Right ventricle myocardium inferior (tissue), 1 donor: ENCODE measurements at regions of chr13 and their contacts with region 1.

Region 1: GRCh38 chr13:48571126-48571913 is 38.4 kb upstream of the RCBTB2 start:
- DNase-seq: no peak
- ATAC-seq: peak; percentile 71

Region 2: DNA sequence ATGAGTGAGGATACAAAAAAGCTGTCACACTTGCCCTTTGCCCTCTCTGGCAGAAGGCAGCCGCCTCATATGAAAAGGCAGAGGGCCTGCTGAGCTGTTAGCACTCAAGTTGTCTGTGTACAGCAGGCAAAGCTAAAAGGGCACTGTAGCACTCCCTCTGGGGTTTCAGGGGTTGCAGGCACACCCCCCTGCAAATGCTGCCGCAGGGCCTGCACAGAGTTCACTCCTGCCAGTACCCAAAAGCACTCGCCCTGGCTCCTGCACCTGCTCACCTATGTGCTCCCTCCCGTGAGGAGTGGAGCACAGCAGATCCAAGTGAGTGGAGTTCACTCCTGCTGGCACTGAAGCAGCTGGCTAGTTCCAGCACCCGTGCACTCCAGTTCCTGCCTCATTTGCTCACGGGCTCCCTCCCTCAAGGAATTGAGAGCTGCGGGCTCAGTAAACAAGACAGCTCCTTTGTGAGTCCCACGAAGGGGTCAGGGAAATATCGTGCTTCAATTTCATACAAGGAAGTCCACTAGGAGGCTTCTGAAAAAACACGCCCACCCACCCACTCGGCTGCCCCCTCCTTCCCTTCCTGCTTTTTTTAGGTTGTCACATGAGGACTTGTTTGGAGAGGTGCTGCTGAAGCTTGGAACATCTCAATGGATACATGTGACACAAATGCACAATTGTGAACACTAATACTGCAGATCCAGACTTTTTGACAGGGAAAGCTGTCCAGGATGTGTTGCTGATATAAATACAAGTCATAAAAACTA is 28.6 kb before region 1 on chr13:
- intact Hi-C with region 1: loop called (anchors 2 kb)
- DNase-seq: peak; percentile 77
- ATAC-seq: peak; percentile 91

Region 3: GRCh38 chr13:48636550-48636949 is 65.2 kb after region 1 on chr13:
- intact Hi-C with region 1: no loop called
- DNase-seq: no peak
- ATAC-seq: peak; percentile 67